CD4-positive, alpha-beta memory T cell (primary cell): ENCODE measurements at regions of chr21 and their contacts with region 1.

Region 1: DNA sequence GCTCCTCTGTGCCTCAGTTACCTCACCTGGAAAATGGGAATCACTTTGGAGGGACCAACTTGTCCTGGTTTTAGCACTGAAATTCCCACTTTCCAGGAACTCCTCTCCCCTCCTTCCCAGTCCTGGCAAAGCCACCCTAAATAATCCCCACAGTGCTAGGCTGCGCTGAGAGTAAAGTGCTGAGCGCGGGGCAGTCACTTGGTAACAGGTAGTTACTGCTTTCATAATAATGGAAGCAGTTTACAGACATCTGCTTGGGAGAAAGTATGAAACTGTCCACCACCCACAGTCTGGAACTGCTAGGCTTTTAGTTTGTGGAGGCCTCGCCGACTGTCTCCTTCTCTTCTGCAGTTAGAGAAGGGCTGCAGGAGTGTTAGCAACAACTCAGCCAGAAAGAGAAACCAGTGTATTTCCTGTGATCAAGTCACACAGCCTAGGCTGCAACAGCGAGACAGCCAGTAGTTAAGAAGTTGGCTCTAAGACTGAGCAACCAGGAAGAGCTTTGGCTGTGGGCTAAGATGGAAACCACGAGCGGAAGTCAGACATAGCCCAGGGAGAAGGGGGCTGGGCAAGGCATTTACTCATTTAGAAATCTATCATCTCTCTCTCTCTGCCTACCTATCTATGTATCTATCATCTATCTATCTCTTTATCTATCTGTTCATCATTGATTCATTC is 30.8 kb upstream of the ABCG1 start:
- DNase-seq: peak; percentile 84 to 91 (median 86)
- H3K4me3 ChIP-seq: peak overlapping the region; percentile 2 to 10
- H3K4me3 Mint-ChIP-seq: peak overlapping the region; percentile 74 to 89 (median 79)
- H3K27ac ChIP-seq: peak overlapping the region; percentile 73
- H3K27ac Mint-ChIP-seq: peak overlapping the region; percentile 90 to 99 (median 98)
- H3K4me1 ChIP-seq: peaks cover 92% of the 10 kb centered on the region
- H3K4me1 Mint-ChIP-seq: peaks cover 34 to 74% (median 60%) of the 10 kb centered on the region in 4 donors
- H3K27me3 ChIP-seq: no peaks in the 10 kb centered on the region
- H3K27me3 Mint-ChIP-seq: no peaks in the 10 kb centered on the region

Region 2: GRCh38 chr21:42164064-42164789 is 23.9 kb before region 1 on chr21:
- CTCF ChIA-PET with region 1: interaction called, 5 read pairs
- POLR2A ChIA-PET with region 1: interaction called, 3 read pairs
- intact Hi-C with region 1: loop called (anchors 1 kb)
- DNase-seq: peak; percentile 42 to 58 (median 51)
- H3K4me3 ChIP-seq: no peak overlapping the region
- H3K4me3 Mint-ChIP-seq: peak overlapping the region in 1 of 8 donors; percentile 21
- H3K27ac ChIP-seq: no peak overlapping the region
- H3K27ac Mint-ChIP-seq: peak overlapping the region in 3 of 7 donors; percentile 42 to 64 (median 59)
- H3K4me1 ChIP-seq: peaks cover 10% of the 10 kb centered on the region
- H3K4me1 Mint-ChIP-seq: peaks cover 8 to 40% (median 20%) of the 10 kb centered on the region in 4 donors
- H3K27me3 ChIP-seq: no peaks in the 10 kb centered on the region
- H3K27me3 Mint-ChIP-seq: no peaks in the 10 kb centered on the region

Region 3: DNA sequence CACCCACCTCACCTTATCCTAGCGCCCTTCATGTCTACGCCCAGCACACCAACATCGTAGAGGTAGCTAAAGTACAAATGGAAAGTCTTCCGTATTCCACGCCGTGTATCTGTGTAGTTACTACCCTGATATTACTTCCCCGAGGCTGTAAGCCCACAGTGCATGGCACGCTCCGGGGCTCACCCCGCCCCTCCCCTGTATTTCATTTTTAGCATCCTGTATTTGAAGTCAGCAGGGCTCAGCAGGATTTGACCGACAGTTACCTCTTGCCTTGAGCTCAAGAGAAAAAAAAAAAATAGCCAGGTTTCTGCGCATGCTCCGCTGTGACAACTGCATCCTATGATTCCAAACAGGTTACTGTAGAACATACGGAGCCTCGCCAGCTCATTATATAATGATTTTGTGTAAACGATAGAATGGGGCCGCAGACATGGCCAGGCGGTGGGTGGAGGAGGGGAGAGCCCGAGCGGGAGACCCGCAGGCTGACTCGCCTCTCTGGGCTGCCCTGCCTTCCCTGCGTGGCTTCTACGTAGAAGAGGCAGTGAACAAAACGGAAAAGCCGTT is 32.1 kb after region 1 on chr21:
- CTCF ChIA-PET with region 1: interaction called, 3 read pairs
- POLR2A ChIA-PET with region 1: interaction called, 35 read pairs
- intact Hi-C with region 1: loop called (anchors 1 kb)
- DNase-seq: peak; percentile 89 to 96 (median 92)
- H3K4me3 ChIP-seq: peak overlapping the region; percentile 80 to 91
- H3K4me3 Mint-ChIP-seq: peak overlapping the region; percentile 86 to 100 (median 96)
- H3K27ac ChIP-seq: peak overlapping the region; percentile 84
- H3K27ac Mint-ChIP-seq: peak overlapping the region; percentile 87 to 100 (median 96)
- H3K4me1 ChIP-seq: peaks cover 27% of the 10 kb centered on the region
- H3K4me1 Mint-ChIP-seq: peaks cover 20 to 44% (median 28%) of the 10 kb centered on the region in 4 donors
- H3K27me3 ChIP-seq: no peaks in the 10 kb centered on the region
- H3K27me3 Mint-ChIP-seq: no peaks in the 10 kb centered on the region

Region 4: GRCh38 chr21:42233067-42233961 is 45.2 kb after region 1 on chr21:
- CTCF ChIA-PET with region 1: interaction called, 6 read pairs
- POLR2A ChIA-PET with region 1: interaction called, 42 read pairs
- intact Hi-C with region 1: loop called (anchors 1 kb)
- DNase-seq: peak; percentile 82 to 98 (median 86)
- H3K4me3 ChIP-seq: no peak overlapping the region
- H3K4me3 Mint-ChIP-seq: peak overlapping the region; percentile 66 to 85 (median 78)
- H3K27ac ChIP-seq: peak overlapping the region; percentile 96
- H3K27ac Mint-ChIP-seq: peak overlapping the region; percentile 93 to 99 (median 97)
- H3K4me1 ChIP-seq: peaks cover 96% of the 10 kb centered on the region
- H3K4me1 Mint-ChIP-seq: peaks cover 61 to 99% (median 89%) of the 10 kb centered on the region in 4 donors
- H3K27me3 ChIP-seq: no peaks in the 10 kb centered on the region
- H3K27me3 Mint-ChIP-seq: no peaks in the 10 kb centered on the region